SK-N-SH (cell line): ENCODE measurements at regions of chr17 and their contacts with region 1.

Region 1: GRCh38 chr17:67980456-67980855 is 15.8 kb downstream of the C17orf58 start:
- DNase-seq: no peak
- H3K4me3 ChIP-seq: no peak overlapping the region
- H3K27ac ChIP-seq: no peak overlapping the region
- H3K4me1 ChIP-seq: no peaks in the 10 kb centered on the region
- H3K27me3 ChIP-seq: no peaks in the 10 kb centered on the region
- CTCF ChIP-seq: no peak
- EP300 ChIP-seq: no peak
- RAD21 ChIP-seq: no peak

Region 2: DNA sequence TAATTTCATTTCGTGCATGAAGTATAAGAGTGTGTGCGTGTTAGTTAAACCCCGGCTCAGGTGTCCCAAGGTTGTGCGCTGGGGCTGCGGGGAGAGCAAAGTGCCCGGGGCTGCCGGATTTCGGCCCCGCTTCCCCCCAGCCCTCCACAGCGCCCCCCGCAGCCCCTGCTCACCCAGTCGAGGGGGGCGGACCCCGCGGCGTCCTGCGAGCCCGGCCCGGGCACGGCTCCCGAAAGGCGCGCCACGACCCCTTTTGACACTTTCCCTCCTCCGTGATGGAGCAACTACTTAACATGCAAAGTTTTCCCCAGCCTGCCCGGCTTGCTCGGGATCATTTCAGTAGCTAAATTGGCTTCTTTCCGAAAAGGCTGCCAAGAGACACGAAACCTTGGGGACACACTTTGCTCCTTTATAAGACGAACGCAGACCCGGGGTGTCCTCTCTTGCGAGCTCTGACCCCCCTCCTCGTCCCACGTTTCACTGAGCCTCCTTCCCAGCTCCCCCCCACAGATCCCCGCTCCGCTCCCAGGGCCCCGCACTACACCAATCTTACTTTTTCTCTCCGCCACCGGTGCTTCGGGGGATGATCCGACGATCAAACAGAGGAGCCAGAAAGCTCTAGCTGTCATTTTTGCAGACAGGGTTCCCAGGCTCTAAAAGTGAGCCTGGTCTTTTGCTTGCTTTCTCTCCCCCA is 15.3 kb after region 1 on chr17:
- CTCF ChIA-PET with region 1: interaction called, 11 read pairs
- POLR2A ChIA-PET with region 1: no interaction called
- DNase-seq: peak; percentile 81
- H3K4me3 ChIP-seq: peak overlapping the region; percentile 56 to 64
- H3K27ac ChIP-seq: peak overlapping the region in 1 of 2 experiments; percentile 41; a peak in 1 of 4 replicates
- H3K4me1 ChIP-seq: peaks cover 6 to 23% of the 10 kb centered on the region in 2 experiments
- H3K27me3 ChIP-seq: no peaks in the 10 kb centered on the region
- CTCF ChIP-seq: peak; percentile 41
- EP300 ChIP-seq: no peak
- RAD21 ChIP-seq: no peak